Mammary epithelial cell (primary cell): ENCODE measurements at regions of chr3 and their contacts with region 1.

Region 1: DNA sequence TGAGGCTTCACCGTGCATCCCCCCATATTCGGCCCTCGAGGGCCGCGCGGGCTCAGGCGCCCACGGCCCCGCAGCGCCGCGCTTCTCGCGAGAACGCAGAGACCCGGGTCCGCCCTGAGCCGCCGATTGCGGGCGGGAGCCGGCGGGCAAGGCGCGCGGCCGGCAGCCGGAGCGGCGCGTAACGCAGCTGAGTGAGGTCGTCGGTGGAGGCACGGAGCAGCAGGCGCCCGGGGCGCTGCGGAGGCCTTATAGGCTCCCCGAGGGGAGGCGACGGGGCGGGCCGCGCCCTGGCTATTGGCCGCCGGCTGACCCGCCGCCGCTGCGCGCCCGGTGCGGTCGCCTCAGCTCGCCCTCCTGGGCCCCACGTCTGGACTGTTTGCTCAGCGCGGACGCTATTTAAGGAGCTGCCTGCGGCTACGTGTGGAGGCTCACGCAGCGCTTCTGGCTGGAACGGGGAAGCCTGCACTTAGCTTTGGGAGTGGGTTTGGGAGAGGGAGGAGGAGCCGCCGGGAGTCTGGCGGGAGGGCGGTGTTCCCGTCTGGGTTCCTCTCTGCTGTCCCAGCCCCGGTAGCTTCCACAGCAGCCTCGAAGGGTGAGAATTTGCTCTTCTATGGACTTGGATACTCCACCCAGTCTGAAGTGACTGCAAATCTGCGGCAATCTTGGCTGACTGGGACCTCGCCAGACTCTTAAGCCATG is at the start of gene PLOD2:
- DNase-seq: peak; percentile 81
- H3K4me3 ChIP-seq: peak within 1 kb of the TSS; percentile 63 to 86 (median 76)
- H3K27ac ChIP-seq: peak within 1 kb of the TSS; percentile 86
- H3K4me1 ChIP-seq: peaks cover 55% of the 10 kb centered on the region
- H3K27me3 ChIP-seq: no peaks in the 10 kb centered on the region
- CTCF ChIP-seq: no peak
- total RNA-seq, gene PLOD2: 42.1 to 112 TPM

Region 2: DNA sequence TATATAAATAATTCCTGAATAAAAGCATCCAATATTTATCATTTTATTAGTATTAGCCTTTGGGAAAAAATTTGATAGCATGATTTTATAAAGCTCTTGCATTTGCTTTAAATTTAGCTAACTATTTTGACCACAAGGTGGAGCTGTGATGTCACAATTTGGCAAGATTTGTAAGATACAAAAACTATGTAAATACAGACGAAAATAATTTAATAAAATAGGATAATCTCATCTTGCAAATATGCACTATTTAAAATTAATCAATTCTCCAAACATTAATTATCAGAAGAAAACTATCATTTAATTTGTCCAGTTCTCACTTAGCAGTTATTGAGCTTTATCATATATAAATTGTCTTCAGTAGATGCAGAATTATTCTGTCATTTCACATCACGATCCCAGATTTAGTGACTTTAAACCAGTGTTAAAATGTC is 95.5 kb before region 1 on chr3:
- CTCF ChIA-PET with region 1: interaction called, 5 read pairs
- dilution Hi-C with region 1: no loop called
- in situ Hi-C with region 1: loop called in 1 of 2 experiments (anchors 25 kb)
- intact Hi-C with region 1: loop called (anchors 1 kb)
- DNase-seq: peak; percentile 24
- H3K4me3 ChIP-seq: no peak overlapping the region
- H3K27ac ChIP-seq: no peak overlapping the region
- H3K4me1 ChIP-seq: no peaks in the 10 kb centered on the region
- H3K27me3 ChIP-seq: no peaks in the 10 kb centered on the region
- CTCF ChIP-seq: peak; percentile 54 to 61

Region 3: DNA sequence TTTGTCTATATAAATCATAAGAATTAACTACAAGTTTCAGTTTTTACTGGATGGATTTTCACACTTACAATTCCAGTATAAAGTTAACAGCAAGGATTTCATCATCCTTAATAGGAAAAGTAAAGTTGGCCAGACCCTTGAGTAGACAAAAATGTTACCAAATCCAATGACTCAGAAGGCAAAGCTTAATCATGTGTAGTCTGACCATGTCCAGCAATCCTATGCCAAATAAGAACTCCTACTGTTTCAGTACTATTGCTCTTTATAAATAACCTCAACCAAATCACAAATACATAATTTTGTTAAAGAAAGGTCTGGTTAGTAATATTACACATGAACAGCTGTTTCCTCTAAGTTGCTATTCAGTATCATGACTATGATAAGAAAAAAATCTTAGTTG is 35.2 kb before region 1 on chr3:
- CTCF ChIA-PET with region 1: no interaction called
- dilution Hi-C with region 1: no loop called
- in situ Hi-C with region 1: no loop called
- intact Hi-C with region 1: loop called (anchors 2 kb)
- DNase-seq: peak; percentile 83
- H3K4me3 ChIP-seq: no peak overlapping the region
- H3K27ac ChIP-seq: no peak overlapping the region
- H3K4me1 ChIP-seq: no peaks in the 10 kb centered on the region
- H3K27me3 ChIP-seq: no peaks in the 10 kb centered on the region
- CTCF ChIP-seq: no peak

Region 4: DNA sequence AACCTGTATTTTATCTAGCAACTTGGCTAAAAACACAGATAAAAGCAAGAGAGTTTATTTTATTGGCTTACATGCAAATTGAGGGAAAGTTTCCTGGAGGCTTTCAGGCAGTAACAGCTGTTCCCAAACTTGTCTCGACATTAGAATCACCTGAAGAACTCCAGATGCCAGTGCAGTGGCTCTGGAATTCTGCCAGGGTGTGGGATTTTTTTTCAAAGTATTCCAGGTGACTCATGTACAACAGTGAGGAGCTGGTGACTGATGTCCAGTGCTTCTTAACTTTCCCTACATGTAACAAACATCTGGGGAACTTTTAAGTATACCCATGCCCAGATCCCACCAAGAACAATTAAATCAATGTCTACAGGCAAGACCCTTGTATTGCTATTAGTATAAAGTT is 23.5 kb after region 1 on chr3:
- CTCF ChIA-PET with region 1: no interaction called
- dilution Hi-C with region 1: no loop called
- in situ Hi-C with region 1: no loop called
- intact Hi-C with region 1: loop called (anchors 2 kb)
- DNase-seq: peak; percentile 85
- H3K4me3 ChIP-seq: no peak overlapping the region
- H3K27ac ChIP-seq: no peak overlapping the region
- H3K4me1 ChIP-seq: peaks cover 12% of the 10 kb centered on the region
- H3K27me3 ChIP-seq: no peaks in the 10 kb centered on the region
- CTCF ChIP-seq: no peak